ENCODE measurements at regions of chr2 and their contacts with region 1.

Region 1: GRCh38 chr2:143110758-143111428 is 18.3 kb upstream of the ARHGAP15 start:
- H3K4me3 ChIP-seq: no peak overlapping the region
- H3K27ac ChIP-seq: no peak overlapping the region
- H3K4me1 ChIP-seq: no peaks in the 10 kb centered on the region
- CTCF ChIP-seq: peak; percentile 64; the same call in 1 of the 2 replicates

Region 2: DNA sequence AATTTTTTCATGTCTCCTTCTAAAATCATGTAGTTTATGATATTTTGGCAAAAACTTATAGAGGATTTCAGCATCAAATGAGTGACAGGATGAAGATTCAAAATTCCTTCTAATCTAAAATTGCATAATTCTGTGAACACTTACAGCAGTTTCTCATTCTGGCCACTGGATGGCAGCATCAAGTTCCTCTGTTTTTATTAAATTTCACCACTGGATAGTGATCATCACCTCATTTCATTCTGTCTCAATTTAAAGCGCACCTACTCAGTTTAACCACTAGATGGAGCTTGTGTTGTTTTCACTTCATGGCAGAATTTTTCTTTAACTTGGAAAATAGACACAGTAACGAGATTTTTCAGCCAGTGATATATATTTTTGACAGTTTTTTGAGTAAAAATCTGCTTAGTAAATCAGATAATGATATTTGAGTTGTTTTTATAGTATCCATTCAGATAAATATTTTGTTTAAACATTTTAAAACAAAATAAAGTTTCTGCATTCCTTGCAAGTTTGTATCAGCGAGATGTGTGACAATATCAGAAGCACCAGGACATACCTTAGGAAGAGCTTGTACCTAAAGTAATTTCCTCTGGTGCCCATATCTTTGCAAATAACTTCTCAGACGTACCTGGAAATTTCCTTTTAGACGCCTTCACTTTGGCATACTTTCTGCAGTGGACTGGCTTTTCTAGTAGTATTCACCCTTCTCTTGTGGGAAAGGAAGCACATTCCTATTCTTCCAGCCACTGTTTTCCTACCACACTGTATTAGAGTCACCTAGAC is 76.4 kb before region 1 on chr2:
- CTCF ChIA-PET with region 1: interaction called, 15 read pairs
- POLR2A ChIA-PET with region 1: no interaction called
- H3K4me3 ChIP-seq: no peak overlapping the region
- H3K27ac ChIP-seq: no peak overlapping the region
- H3K4me1 ChIP-seq: no peaks in the 10 kb centered on the region
- CTCF ChIP-seq: peak; percentile 75

Region 3: GRCh38 chr2:143121079-143121478 is 10.2 kb after region 1 on chr2:
- CTCF ChIA-PET with region 1: interaction called, 25 read pairs
- POLR2A ChIA-PET with region 1: no interaction called
- H3K4me3 ChIP-seq: no peak overlapping the region
- H3K27ac ChIP-seq: no peak overlapping the region
- H3K4me1 ChIP-seq: no peaks in the 10 kb centered on the region
- CTCF ChIP-seq: no peak

Region 4: GRCh38 chr2:143162123-143162837 is 51.4 kb after region 1 on chr2:
- CTCF ChIA-PET with region 1: interaction called, 32 read pairs
- POLR2A ChIA-PET with region 1: no interaction called
- H3K4me3 ChIP-seq: no peak overlapping the region
- H3K27ac ChIP-seq: no peak overlapping the region
- H3K4me1 ChIP-seq: peaks cover 17% of the 10 kb centered on the region
- CTCF ChIP-seq: peak; percentile 74

Region 5: DNA sequence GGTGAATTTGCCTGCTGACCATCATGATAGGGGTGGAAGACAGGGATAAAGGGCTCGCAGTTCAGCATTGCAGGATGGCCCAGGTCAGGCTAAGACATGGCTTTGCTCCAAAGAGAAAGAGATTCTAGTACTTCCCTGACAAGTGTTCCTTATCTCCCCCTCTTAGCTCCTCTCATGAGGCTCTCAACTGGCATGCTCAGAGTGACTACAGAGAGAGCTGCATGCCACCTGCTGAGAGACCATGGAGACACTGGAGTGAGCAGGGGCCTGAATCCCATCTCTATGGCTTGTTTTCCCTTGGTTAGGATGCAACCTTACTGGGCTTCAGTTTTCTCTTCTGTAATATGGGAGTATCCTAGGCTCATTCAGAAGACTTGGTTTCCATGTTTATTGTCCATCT is 112.7 kb after region 1 on chr2:
- CTCF ChIA-PET with region 1: interaction called, 31 read pairs
- POLR2A ChIA-PET with region 1: no interaction called
- H3K4me3 ChIP-seq: no peak overlapping the region
- H3K27ac ChIP-seq: no peak overlapping the region
- H3K4me1 ChIP-seq: no peaks in the 10 kb centered on the region
- CTCF ChIP-seq: no peak

Measured in HEK293 (cell line).